Colonic mucosa (tissue), 4 donors: ENCODE measurements at regions of chr5 and their contacts with region 1.

Region 1: GRCh38 chr5:131796793-131797693 is at the start of gene FNIP1:
- DNase-seq: peak; percentile 100
- H3K4me3 ChIP-seq: peak within 1 kb of the TSS; percentile 92
- H3K27ac ChIP-seq: peak within 1 kb of the TSS; percentile 98
- H3K4me1 ChIP-seq: no peaks in the 10 kb centered on the region
- H3K27me3 ChIP-seq: no peaks in the 10 kb centered on the region
- CTCF ChIP-seq: no peak
- total RNA-seq, gene FNIP1: 18.1 to 41.2 TPM

Region 2: DNA sequence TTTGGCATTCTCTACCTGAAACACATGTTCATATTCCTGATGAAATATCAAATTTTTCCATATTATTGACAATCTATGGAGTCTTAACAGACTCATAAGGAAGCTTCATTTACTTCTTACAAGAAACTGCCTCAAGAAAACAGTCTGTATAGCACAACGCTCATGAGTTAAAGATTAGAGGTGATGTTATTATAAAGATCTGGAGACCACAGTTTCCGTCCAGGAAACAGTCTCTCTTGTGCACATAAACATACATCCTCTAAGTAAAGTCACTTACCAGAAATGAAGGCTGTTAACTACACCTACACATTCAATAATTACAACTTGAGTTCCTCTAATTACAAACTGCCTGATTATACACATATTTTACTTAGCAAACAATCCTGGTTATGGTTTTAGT is 248.9 kb before region 1 on chr5:
- intact Hi-C with region 1: no loop called
- DNase-seq: no peak
- H3K4me3 ChIP-seq: no peak overlapping the region
- H3K27ac ChIP-seq: peak overlapping the region; percentile 8
- H3K4me1 ChIP-seq: no peaks in the 10 kb centered on the region
- H3K27me3 ChIP-seq: no peaks in the 10 kb centered on the region
- CTCF ChIP-seq: no peak

Region 3: GRCh38 chr5:131634996-131635754 is 161.9 kb before region 1 on chr5 and contains the start of gene RAPGEF6:
- intact Hi-C with region 1: loop called (anchors 5 kb)
- DNase-seq: peak; percentile 98
- H3K4me3 ChIP-seq: peak within 1 kb of the TSS; percentile 69
- H3K27ac ChIP-seq: peak within 1 kb of the TSS; percentile 100
- H3K4me1 ChIP-seq: peaks cover 18% of the 10 kb centered on the region
- H3K27me3 ChIP-seq: no peaks in the 10 kb centered on the region
- CTCF ChIP-seq: no peak
- total RNA-seq, gene RAPGEF6: 14.9 to 16.2 TPM

Region 4: DNA sequence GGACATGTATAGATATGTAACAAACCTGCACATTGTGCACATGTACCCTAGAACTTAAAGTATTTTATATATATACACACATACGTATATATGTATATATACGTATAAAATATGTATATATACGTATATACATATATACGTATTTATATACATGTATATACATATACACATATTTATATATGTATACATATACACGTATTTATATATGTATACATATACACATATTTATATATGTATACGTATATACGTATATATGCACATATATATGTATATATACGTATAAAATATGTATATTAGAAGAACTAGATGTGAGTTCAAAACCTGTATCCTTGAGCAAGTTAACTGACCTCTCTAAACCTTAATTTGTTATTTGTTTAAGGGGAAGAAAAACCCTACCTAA is 61.6 kb before region 1 on chr5:
- intact Hi-C with region 1: no loop called
- DNase-seq: no peak
- H3K4me3 ChIP-seq: no peak overlapping the region
- H3K27ac ChIP-seq: no peak overlapping the region
- H3K4me1 ChIP-seq: no peaks in the 10 kb centered on the region
- H3K27me3 ChIP-seq: no peaks in the 10 kb centered on the region
- CTCF ChIP-seq: no peak

Region 5: GRCh38 chr5:131747180-131748105 is 49.6 kb before region 1 on chr5:
- intact Hi-C with region 1: no loop called
- DNase-seq: no peak
- H3K4me3 ChIP-seq: no peak overlapping the region
- H3K27ac ChIP-seq: no peak overlapping the region
- H3K4me1 ChIP-seq: no peaks in the 10 kb centered on the region
- H3K27me3 ChIP-seq: no peaks in the 10 kb centered on the region
- CTCF ChIP-seq: no peak